ENCODE measurements at regions of chr14 and their contacts with region 1.

Region 1: DNA sequence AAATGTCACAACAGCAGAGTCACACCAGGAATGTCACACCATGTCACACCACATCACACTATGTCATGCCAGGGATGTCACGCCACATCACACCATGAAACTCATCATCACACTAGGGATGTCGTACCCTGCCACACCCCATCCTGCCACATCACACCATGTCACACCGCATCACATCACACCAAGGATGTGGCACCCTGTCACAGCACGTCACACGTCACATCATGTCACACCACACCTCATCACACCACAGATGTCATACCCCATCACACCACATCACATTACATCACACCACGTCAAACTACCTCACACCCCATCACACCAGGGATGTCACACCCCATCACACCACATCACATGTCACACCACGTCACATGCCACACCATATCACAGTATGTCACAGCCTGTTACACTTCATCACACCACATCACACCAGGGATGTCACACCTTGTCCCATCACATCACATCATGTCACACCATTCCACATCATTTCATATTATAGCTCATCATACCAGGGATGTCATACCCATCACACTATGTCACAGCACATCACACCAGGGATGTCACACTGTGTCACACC is 90.9 kb downstream of the TMEM121 start:
- DNase-seq: peak; percentile 35
- ATAC-seq: peak; percentile 16
- H3K4me3 Mint-ChIP-seq: no peak overlapping the region
- H3K27ac Mint-ChIP-seq: no peak overlapping the region
- H3K4me1 Mint-ChIP-seq: no peaks in the 10 kb centered on the region
- H3K27me3 Mint-ChIP-seq: peaks cover 8% of the 10 kb centered on the region

Region 2: DNA sequence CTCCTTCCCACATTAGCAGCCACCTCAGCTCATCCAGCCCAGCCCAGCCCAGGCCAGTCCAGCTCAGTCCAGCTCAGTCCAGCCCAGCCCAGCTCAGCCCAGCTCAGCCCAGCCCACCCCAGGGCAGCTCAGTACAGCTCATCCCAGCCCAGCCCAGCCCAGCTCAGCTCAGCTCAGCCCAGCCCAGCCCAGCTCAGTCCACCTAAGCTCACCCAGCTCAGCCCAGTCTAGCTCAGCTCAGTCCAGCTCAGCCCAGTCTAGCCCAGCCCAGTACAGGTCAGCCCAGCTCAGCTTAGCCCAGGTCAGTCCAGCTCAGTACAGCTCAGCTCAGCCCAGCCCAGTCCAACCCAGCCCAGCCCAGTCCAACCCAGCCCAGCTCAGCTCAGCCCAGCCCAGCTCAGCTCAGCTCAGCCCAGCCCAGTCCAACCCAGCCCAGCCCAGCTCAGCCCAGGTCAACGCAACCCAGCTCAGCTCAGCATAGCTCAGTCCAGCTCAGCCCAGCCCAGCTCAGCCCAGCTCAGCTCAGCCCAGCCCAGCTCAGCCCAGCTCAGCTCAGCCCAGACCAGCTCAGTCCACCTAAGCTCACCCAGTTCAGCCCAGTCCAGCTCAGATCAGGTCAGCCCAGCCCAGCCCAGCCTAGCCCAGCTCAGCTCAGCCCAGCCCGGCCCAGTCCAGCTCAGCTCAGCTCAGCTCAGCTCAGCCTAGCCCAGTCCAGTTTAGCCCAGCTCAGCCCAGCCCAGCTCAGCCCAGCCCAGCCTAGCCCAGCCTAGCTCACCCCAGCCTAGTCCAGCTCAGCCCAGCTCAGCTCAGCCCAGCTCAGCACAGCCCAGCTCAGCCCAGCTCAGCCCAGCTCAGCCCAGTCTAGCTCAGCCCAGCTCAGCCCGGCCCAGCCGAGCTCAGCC is 27.9 kb before region 1 on chr14:
- CTCF ChIA-PET with region 1: no interaction called
- POLR2A ChIA-PET with region 1: no interaction called
- intact Hi-C with region 1: no loop called
- DNase-seq: no peak
- ATAC-seq: peak; percentile 23
- H3K4me3 Mint-ChIP-seq: no peak overlapping the region
- H3K27ac Mint-ChIP-seq: peak overlapping the region; percentile 25
- H3K4me1 Mint-ChIP-seq: no peaks in the 10 kb centered on the region
- H3K27me3 Mint-ChIP-seq: no peaks in the 10 kb centered on the region

Region 3: DNA sequence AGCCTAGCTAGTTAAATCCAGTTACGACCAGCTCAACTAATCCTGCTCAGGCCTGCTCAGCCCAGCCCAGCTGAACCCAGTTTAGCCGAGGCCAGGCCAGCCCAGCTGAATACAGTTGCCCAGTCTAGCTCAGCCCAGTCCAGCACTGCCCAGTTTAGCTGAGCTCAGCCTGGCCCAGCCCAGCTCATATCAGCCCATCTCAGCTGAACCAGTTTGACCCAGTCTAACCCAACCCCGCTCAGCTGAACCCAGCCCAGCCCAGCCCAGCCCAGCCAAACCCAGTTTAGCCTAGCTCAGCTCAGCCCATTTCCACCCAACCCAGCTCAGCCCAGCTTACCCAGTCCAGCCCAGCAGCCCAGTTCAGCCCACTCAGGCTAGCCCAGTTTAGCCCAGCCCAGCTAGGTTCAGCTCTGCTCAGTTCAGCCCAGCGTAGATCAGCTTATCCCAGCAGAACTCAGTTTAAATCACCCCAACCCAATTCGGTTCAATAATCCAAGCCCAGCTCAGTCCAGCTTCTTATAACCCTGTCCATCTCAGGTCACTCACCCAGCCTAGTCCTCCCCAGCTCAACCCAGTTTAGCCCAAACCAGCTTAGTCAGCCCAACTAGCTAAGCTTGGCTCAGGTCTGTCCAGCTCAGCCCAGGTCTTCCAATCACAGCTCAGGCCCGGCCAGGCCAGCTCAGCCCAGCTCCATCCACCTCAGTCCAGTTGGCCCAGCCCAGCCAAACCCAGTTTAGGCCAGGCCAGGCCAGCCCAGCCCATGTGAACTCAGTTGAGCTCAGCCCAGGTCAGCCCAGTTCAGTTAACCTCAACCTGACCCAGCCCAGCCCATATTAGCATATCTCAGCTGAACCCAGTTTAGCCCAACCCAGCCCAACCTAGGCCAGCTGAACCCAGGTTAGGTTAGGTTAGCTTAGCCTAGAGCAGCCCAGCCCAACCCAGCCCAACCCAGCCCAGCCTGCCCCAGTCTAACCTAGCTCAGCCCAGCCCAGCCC is 14.2 kb before region 1 on chr14:
- CTCF ChIA-PET with region 1: no interaction called
- POLR2A ChIA-PET with region 1: no interaction called
- intact Hi-C with region 1: no loop called
- DNase-seq: no peak
- ATAC-seq: no peak
- H3K4me3 Mint-ChIP-seq: no peak overlapping the region
- H3K27ac Mint-ChIP-seq: no peak overlapping the region
- H3K4me1 Mint-ChIP-seq: no peaks in the 10 kb centered on the region
- H3K27me3 Mint-ChIP-seq: no peaks in the 10 kb centered on the region

Region 4: DNA sequence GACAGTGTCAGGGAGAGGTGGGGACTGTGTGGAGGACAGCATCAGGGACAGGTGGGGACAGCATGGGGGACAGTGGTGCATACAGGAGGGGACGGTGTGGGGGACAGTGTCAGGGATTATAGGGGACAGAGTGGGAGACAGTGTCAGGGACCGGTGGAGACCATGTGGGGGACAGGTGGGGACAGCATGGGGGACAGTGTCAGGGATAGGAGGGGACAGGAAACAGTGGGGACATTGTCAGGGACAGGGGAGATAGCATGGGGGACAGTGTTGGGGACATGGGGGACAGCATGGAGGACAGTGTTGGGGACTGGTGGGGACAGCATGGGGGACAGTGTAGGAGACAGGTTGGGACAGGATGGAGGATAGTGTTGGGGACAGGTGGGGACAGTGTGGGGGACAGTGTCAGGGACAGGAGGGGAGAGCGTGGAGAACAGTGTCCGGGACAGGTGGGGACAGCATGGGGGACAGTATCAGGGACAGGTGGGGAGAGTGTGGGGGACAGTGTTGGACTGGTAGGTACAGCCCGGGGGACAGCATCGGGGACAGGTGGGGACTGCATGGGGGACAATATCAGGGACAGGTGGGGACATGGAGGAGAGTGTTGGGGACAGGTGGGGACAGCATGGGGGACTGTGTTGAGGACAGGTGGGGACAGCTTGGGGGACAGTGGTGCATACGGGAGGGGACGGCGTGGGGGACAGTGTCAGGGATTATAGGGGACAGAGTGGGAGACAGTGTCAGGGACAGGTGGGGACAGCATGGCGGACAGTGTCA is 121.2 kb after region 1 on chr14:
- CTCF ChIA-PET with region 1: no interaction called
- POLR2A ChIA-PET with region 1: no interaction called
- intact Hi-C with region 1: loop called in 1 of 2 experiments (anchors 10 kb)
- DNase-seq: no peak
- ATAC-seq: no peak
- H3K4me3 Mint-ChIP-seq: no peak overlapping the region
- H3K27ac Mint-ChIP-seq: no peak overlapping the region
- H3K4me1 Mint-ChIP-seq: no peaks in the 10 kb centered on the region
- H3K27me3 Mint-ChIP-seq: no peaks in the 10 kb centered on the region

Measured in activated CD4-positive, alpha-beta T cell treated with anti-CD3 and anti-CD28 coated beads for 36 hours (primary cell).